MCF 10A (cell line): ENCODE measurements at regions of chr19 and their contacts with region 1.

Region 1: GRCh38 chr19:34404109-34404897 is at the start of gene PDCD2L:
- DNase-seq: peak; percentile 94
- H3K4me3 Mint-ChIP-seq: peak within 1 kb of the TSS; percentile 88
- H3K27ac Mint-ChIP-seq: peak within 1 kb of the TSS; percentile 86
- H3K4me1 Mint-ChIP-seq: no peaks in the 10 kb centered on the region
- H3K27me3 Mint-ChIP-seq: no peaks in the 10 kb centered on the region
- CTCF ChIP-seq: no peak
- total RNA-seq, gene PDCD2L: 11.1 and 24.4 TPM in 2 replicates

Region 2: GRCh38 chr19:34428549-34429285 is 24.4 kb after region 1 on chr19:
- CTCF ChIA-PET with region 1: interaction called, 3 read pairs
- POLR2A ChIA-PET with region 1: interaction called, 10 read pairs
- intact Hi-C with region 1: no loop called
- DNase-seq: peak; percentile 47
- H3K4me3 Mint-ChIP-seq: peak overlapping the region; percentile 88
- H3K27ac Mint-ChIP-seq: peak overlapping the region; percentile 88
- H3K4me1 Mint-ChIP-seq: peaks cover 13% of the 10 kb centered on the region
- H3K27me3 Mint-ChIP-seq: no peaks in the 10 kb centered on the region
- CTCF ChIP-seq: no peak